B cell (primary cell): ENCODE measurements at regions of chr5 and their contacts with region 1.

Region 1: GRCh38 chr5:173293817-173294672 is 34.2 kb downstream of the STC2 start:
- DNase-seq: peak; percentile 70
- ATAC-seq: peak; percentile 53
- H3K4me3 ChIP-seq: no peak overlapping the region
- H3K4me3 Mint-ChIP-seq: peak overlapping the region; percentile 8
- H3K27ac ChIP-seq: no peak overlapping the region
- H3K27ac Mint-ChIP-seq: no peak overlapping the region
- H3K4me1 ChIP-seq: peaks cover 11 to 12% of the 10 kb centered on the region in 2 donors
- H3K4me1 Mint-ChIP-seq: peaks cover 10% of the 10 kb centered on the region
- H3K27me3 ChIP-seq: peaks cover 0 to 30% (median 14%) of the 10 kb centered on the region in 4 experiments
- H3K27me3 Mint-ChIP-seq: peaks cover 46% of the 10 kb centered on the region
- CTCF ChIP-seq: peak; percentile 88

Region 2: GRCh38 chr5:173304591-173304988 is 10.5 kb after region 1 on chr5:
- CTCF ChIA-PET with region 1: interaction called, 11 read pairs
- POLR2A ChIA-PET with region 1: no interaction called
- intact Hi-C with region 1: no loop called
- DNase-seq: no peak
- ATAC-seq: no peak
- H3K4me3 ChIP-seq: no peak overlapping the region
- H3K4me3 Mint-ChIP-seq: no peak overlapping the region
- H3K27ac ChIP-seq: no peak overlapping the region
- H3K27ac Mint-ChIP-seq: no peak overlapping the region
- H3K4me1 ChIP-seq: no peaks in the 10 kb centered on the region
- H3K4me1 Mint-ChIP-seq: no peaks in the 10 kb centered on the region
- H3K27me3 ChIP-seq: no peaks in the 10 kb centered on the region
- H3K27me3 Mint-ChIP-seq: peaks cover 40% of the 10 kb centered on the region
- CTCF ChIP-seq: no peak

Region 3: DNA sequence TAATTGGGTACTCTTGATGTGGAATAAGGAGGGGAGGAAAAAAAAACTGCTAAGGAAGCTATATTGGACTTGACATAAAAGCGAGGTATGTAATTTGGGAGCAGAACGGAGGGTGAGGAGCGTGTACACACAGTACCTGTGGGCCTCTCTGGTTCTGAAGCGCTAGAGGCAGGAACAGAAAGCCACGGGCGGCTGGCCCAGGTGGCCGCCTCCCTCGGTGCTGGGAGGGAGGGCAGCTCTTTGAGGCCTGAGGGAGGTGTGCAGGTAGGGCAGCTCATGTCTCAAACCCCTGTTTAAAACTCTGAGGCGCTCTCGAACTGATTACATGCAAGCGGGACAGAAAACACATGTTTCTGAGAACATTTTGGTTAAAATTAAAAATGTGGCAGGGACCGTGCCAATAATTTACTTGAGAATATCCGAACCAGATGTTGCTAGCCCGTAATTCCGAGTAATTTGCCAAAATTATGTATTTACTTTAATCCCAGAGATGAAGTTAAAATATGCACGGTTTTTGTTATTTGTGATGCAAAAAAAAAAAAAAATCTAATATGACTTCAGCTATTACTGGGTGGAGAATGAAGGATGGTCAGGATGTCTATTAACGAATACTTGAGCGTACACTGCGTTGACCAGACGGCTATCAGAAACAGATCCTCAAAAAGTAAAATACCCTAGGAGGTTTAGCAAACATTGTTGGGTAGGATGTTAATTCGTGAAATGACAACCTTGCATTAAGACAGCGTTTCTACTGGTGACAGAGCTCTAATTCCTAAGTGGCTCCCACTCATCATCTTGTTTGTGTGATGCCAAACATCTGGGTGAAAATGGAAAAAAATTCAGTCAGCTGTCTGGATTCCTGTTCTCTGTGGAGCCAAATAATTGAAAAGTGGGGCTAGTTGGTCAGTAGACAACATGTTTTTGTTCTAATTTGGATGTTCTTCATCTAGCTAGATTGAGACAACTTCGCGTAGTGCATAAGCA is 58.6 kb after region 1 on chr5:
- CTCF ChIA-PET with region 1: no interaction called
- POLR2A ChIA-PET with region 1: no interaction called
- intact Hi-C with region 1: no loop called
- DNase-seq: no peak
- ATAC-seq: no peak
- H3K4me3 ChIP-seq: no peak overlapping the region
- H3K4me3 Mint-ChIP-seq: no peak overlapping the region
- H3K27ac ChIP-seq: no peak overlapping the region
- H3K27ac Mint-ChIP-seq: no peak overlapping the region
- H3K4me1 ChIP-seq: no peaks in the 10 kb centered on the region
- H3K4me1 Mint-ChIP-seq: no peaks in the 10 kb centered on the region
- H3K27me3 ChIP-seq: no peaks in the 10 kb centered on the region
- H3K27me3 Mint-ChIP-seq: peaks cover 18% of the 10 kb centered on the region
- CTCF ChIP-seq: no peak

Region 4: GRCh38 chr5:173573126-173573960 is 279.3 kb after region 1 on chr5:
- CTCF ChIA-PET with region 1: interaction called, 3 read pairs
- POLR2A ChIA-PET with region 1: no interaction called
- intact Hi-C with region 1: loop called (anchors 5 kb)
- DNase-seq: peak; percentile 66
- ATAC-seq: peak; percentile 80
- H3K4me3 ChIP-seq: no peak overlapping the region
- H3K4me3 Mint-ChIP-seq: no peak overlapping the region
- H3K27ac ChIP-seq: no peak overlapping the region
- H3K27ac Mint-ChIP-seq: no peak overlapping the region
- H3K4me1 ChIP-seq: peaks cover 4 to 5% of the 10 kb centered on the region in 2 donors
- H3K4me1 Mint-ChIP-seq: peaks cover 7% of the 10 kb centered on the region
- H3K27me3 ChIP-seq: peaks cover 0 to 18% (median 0%) of the 10 kb centered on the region in 4 experiments
- H3K27me3 Mint-ChIP-seq: peaks cover 41% of the 10 kb centered on the region
- CTCF ChIP-seq: peak; percentile 99

Region 5: GRCh38 chr5:173671121-173671949 is 377.3 kb after region 1 on chr5:
- CTCF ChIA-PET with region 1: no interaction called
- POLR2A ChIA-PET with region 1: no interaction called
- intact Hi-C with region 1: no loop called
- DNase-seq: no peak
- ATAC-seq: no peak
- H3K4me3 ChIP-seq: no peak overlapping the region
- H3K4me3 Mint-ChIP-seq: no peak overlapping the region
- H3K27ac ChIP-seq: no peak overlapping the region
- H3K27ac Mint-ChIP-seq: no peak overlapping the region
- H3K4me1 ChIP-seq: no peaks in the 10 kb centered on the region
- H3K4me1 Mint-ChIP-seq: no peaks in the 10 kb centered on the region
- H3K27me3 ChIP-seq: no peaks in the 10 kb centered on the region
- H3K27me3 Mint-ChIP-seq: peaks cover 4% of the 10 kb centered on the region
- CTCF ChIP-seq: no peak